Activated naive CD4-positive, alpha-beta T cell treated with anti-CD3 and anti-CD28 coated beads for 36 hours (primary cell): ENCODE measurements at regions of chr7 and their contacts with region 1.

Region 1: DNA sequence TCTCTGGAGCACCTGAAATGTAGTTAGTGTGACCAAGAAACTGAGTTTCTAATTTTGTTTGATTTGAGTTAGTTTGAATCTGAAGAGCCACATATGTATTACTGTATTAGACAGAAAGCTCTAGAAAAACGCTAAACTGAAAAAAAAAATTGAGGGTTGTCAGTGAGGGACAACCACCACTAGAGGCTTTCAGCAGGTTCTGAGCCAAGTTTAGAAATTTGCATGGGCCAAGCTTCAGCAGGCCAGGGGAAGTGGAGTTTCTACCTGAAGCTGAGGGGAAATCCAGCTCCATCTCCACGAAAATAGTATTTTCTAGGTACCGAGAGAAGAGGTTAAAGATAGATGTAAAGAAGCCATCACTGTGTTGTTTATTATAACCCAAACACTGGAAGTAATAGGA is 77.9 kb upstream of the PLXNA4 start:
- DNase-seq: peak; percentile 53
- H3K4me3 Mint-ChIP-seq: no peak overlapping the region
- H3K27ac Mint-ChIP-seq: peak overlapping the region; percentile 74
- H3K4me1 Mint-ChIP-seq: peaks cover 39% of the 10 kb centered on the region
- H3K27me3 Mint-ChIP-seq: no peaks in the 10 kb centered on the region

Region 2: DNA sequence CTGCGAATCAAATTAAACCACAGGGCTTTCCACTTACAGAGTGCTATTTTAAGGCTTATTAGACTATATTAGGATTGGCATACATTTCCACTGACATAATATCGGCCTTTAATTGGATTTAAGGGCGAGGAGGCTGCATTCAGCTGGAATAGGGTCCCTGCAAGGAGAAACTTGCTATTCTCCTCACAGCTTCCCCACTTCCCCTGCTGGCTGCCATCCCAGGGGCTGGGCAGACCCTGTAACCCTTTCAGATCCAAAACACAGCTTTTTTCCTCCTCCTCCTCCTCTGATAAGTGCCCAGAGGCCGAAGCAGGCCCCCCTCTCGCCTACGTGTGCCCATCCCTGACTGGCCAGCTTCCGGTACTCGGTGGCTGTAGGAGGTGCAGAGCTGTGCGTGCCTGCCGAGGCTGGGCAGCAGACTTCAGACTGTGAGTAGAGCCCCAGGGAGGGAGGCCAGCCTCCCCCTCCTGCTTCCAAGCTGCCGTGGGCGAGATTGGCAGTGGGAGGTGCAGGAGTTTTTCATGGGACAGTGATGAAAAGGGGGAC is 302.1 kb before region 1 on chr7:
- CTCF ChIA-PET with region 1: no interaction called
- intact Hi-C with region 1: no loop called
- DNase-seq: no peak
- H3K4me3 Mint-ChIP-seq: no peak overlapping the region
- H3K27ac Mint-ChIP-seq: no peak overlapping the region
- H3K4me1 Mint-ChIP-seq: no peaks in the 10 kb centered on the region
- H3K27me3 Mint-ChIP-seq: peaks cover 23% of the 10 kb centered on the region

Region 3: DNA sequence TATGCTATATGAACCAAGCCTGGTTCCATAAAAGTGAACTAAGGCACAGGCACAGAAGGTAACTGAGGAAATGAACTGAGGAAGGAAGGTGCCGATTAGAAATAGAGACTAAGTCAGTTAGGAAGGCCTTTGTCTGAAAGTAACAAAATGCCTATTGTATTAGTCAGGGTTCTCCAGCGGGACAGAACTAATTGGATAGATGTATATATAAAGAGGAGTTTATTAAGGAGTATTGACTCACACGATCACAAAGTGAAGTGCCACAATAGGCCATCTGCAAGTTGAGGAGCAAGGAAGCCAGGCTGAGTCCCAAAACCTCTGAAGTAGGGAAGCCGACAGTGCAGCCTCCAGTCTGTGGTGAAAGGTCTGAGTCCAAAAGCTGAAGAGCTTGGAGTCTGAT is 64.0 kb before region 1 on chr7:
- CTCF ChIA-PET with region 1: no interaction called
- intact Hi-C with region 1: no loop called
- DNase-seq: no peak
- H3K4me3 Mint-ChIP-seq: no peak overlapping the region
- H3K27ac Mint-ChIP-seq: no peak overlapping the region
- H3K4me1 Mint-ChIP-seq: no peaks in the 10 kb centered on the region
- H3K27me3 Mint-ChIP-seq: no peaks in the 10 kb centered on the region

Region 4: GRCh38 chr7:132666071-132666774 is 12.1 kb after region 1 on chr7:
- CTCF ChIA-PET with region 1: interaction called, 10 read pairs
- intact Hi-C with region 1: loop called (anchors 1 kb)
- DNase-seq: peak; percentile 22
- H3K4me3 Mint-ChIP-seq: no peak overlapping the region
- H3K27ac Mint-ChIP-seq: peak overlapping the region; percentile 25
- H3K4me1 Mint-ChIP-seq: peaks cover 10% of the 10 kb centered on the region
- H3K27me3 Mint-ChIP-seq: no peaks in the 10 kb centered on the region

Region 5: GRCh38 chr7:132773527-132773956 is 119.4 kb after region 1 on chr7:
- CTCF ChIA-PET with region 1: no interaction called
- intact Hi-C with region 1: loop called (anchors 5 kb)
- DNase-seq: no peak
- H3K4me3 Mint-ChIP-seq: no peak overlapping the region
- H3K27ac Mint-ChIP-seq: no peak overlapping the region
- H3K4me1 Mint-ChIP-seq: peaks cover 39% of the 10 kb centered on the region
- H3K27me3 Mint-ChIP-seq: no peaks in the 10 kb centered on the region

Region 6: GRCh38 chr7:132865366-132866143 is 211.4 kb after region 1 on chr7:
- CTCF ChIA-PET with region 1: no interaction called
- intact Hi-C with region 1: no loop called
- DNase-seq: no peak
- H3K4me3 Mint-ChIP-seq: no peak overlapping the region
- H3K27ac Mint-ChIP-seq: no peak overlapping the region
- H3K4me1 Mint-ChIP-seq: peaks cover 3% of the 10 kb centered on the region
- H3K27me3 Mint-ChIP-seq: no peaks in the 10 kb centered on the region